ENCODE measurements at regions of chr3 and their contacts with region 1.

Region 1: DNA sequence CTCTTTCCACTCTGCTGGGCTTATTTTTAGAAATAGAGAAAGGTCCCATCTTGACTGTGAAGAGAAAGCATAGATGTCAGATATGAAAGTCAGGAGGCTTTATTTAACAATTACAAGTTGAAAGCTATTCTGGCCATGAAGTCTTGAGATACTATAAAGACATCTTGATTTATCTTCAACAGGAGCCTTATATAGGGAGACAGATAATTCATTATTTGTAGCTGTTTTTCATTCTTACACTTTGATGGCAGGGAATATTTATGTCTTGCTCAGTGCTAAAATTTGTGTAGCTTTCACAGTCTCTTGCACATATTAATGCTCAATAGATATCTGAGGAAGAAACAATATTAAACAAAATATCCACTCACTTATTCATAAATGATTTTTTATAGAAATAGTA is 248.8 kb downstream of the C3orf38 start:
- DNase-seq: no peak
- ATAC-seq: no peak
- H3K4me3 ChIP-seq: no peak overlapping the region
- H3K4me3 Mint-ChIP-seq: no peak overlapping the region
- H3K27ac ChIP-seq: no peak overlapping the region
- H3K27ac Mint-ChIP-seq: no peak overlapping the region
- H3K4me1 ChIP-seq: no peaks in the 10 kb centered on the region
- H3K4me1 Mint-ChIP-seq: no peaks in the 10 kb centered on the region
- H3K27me3 ChIP-seq: no peaks in the 10 kb centered on the region
- H3K27me3 Mint-ChIP-seq: no peaks in the 10 kb centered on the region

Region 2: GRCh38 chr3:88149509-88150362 is 248.8 kb before region 1 on chr3 and contains the start of gene C3orf38:
- CTCF ChIA-PET with region 1: no interaction called
- POLR2A ChIA-PET with region 1: no interaction called
- DNase-seq: peak; percentile 64 to 85 (median 76)
- ATAC-seq: peak; percentile 94 to 97 (median 96)
- H3K4me3 ChIP-seq: peak within 1 kb of the TSS; percentile 86 to 98
- H3K4me3 Mint-ChIP-seq: peak within 1 kb of the TSS; percentile 95 to 97 (median 96)
- H3K27ac ChIP-seq: peak within 1 kb of the TSS; percentile 94
- H3K27ac Mint-ChIP-seq: peak within 1 kb of the TSS; percentile 99
- H3K4me1 ChIP-seq: peaks cover 15 to 19% of the 10 kb centered on the region in 2 experiments
- H3K4me1 Mint-ChIP-seq: peaks cover 37 to 46% (median 45%) of the 10 kb centered on the region in 3 donors
- H3K27me3 ChIP-seq: no peaks in the 10 kb centered on the region
- H3K27me3 Mint-ChIP-seq: no peaks in the 10 kb centered on the region
- total RNA-seq, gene C3orf38: 26.0 to 39.3 (median 26.8) TPM

Region 3: GRCh38 chr3:88324788-88325187 is 73.8 kb before region 1 on chr3:
- CTCF ChIA-PET with region 1: interaction called in 1 of 2 experiments, 11 read pairs
- POLR2A ChIA-PET with region 1: no interaction called
- DNase-seq: no peak
- ATAC-seq: no peak
- H3K4me3 ChIP-seq: no peak overlapping the region
- H3K4me3 Mint-ChIP-seq: no peak overlapping the region
- H3K27ac ChIP-seq: no peak overlapping the region
- H3K27ac Mint-ChIP-seq: no peak overlapping the region
- H3K4me1 ChIP-seq: no peaks in the 10 kb centered on the region
- H3K4me1 Mint-ChIP-seq: no peaks in the 10 kb centered on the region
- H3K27me3 ChIP-seq: no peaks in the 10 kb centered on the region
- H3K27me3 Mint-ChIP-seq: no peaks in the 10 kb centered on the region

Region 4: GRCh38 chr3:88433568-88433967 is 35.0 kb after region 1 on chr3:
- CTCF ChIA-PET with region 1: no interaction called
- POLR2A ChIA-PET with region 1: no interaction called
- DNase-seq: no peak
- ATAC-seq: no peak
- H3K4me3 ChIP-seq: no peak overlapping the region
- H3K4me3 Mint-ChIP-seq: no peak overlapping the region
- H3K27ac ChIP-seq: no peak overlapping the region
- H3K27ac Mint-ChIP-seq: no peak overlapping the region
- H3K4me1 ChIP-seq: peaks cover 0 to 2% of the 10 kb centered on the region in 2 experiments
- H3K4me1 Mint-ChIP-seq: no peaks in the 10 kb centered on the region
- H3K27me3 ChIP-seq: no peaks in the 10 kb centered on the region
- H3K27me3 Mint-ChIP-seq: no peaks in the 10 kb centered on the region

Measured in T-cell (primary cell).